ENCODE measurements at regions of chr5 and their contacts with region 1.

Region 1: GRCh38 chr5:13063088-13063487 is 881.4 kb downstream of the DNAH5 start:
- DNase-seq: no peak

Region 2: GRCh38 chr5:13034048-13034447 is 29.0 kb before region 1 on chr5:
- intact Hi-C with region 1: no loop called
- DNase-seq: no peak

Region 3: GRCh38 chr5:13427871-13428725 is 365.0 kb after region 1 on chr5:
- intact Hi-C with region 1: loop called in 1 of 2 experiments (anchors 5 kb)
- DNase-seq: no peak

Measured in posterior vena cava (tissue), 2 donors.